ENCODE measurements at regions of chr22 and their contacts with region 1.

Region 1: GRCh38 chr22:41237707-41238569 is 2.8 kb downstream of the CHADL start:
- DNase-seq: peak; percentile 69 to 84 (median 77)
- H3K4me3 ChIP-seq: peak overlapping the region; percentile 50
- H3K4me3 Mint-ChIP-seq: peak overlapping the region in 5 of 7 donors; percentile 24 to 76 (median 70)
- H3K27ac ChIP-seq: no peak overlapping the region
- H3K27ac Mint-ChIP-seq: no peak overlapping the region
- H3K4me1 ChIP-seq: peaks cover 9% of the 10 kb centered on the region
- H3K4me1 Mint-ChIP-seq: peaks cover 3 to 15% (median 4%) of the 10 kb centered on the region in 3 donors
- H3K27me3 ChIP-seq: no peaks in the 10 kb centered on the region
- H3K27me3 Mint-ChIP-seq: no peaks in the 10 kb centered on the region

Region 2: GRCh38 chr22:40928657-40929056 is 309.3 kb before region 1 on chr22:
- CTCF ChIA-PET with region 1: interaction called, 66 read pairs
- POLR2A ChIA-PET with region 1: interaction called, 9 read pairs
- DNase-seq: no peak
- H3K4me3 ChIP-seq: no peak overlapping the region
- H3K4me3 Mint-ChIP-seq: no peak overlapping the region
- H3K27ac ChIP-seq: no peak overlapping the region
- H3K27ac Mint-ChIP-seq: no peak overlapping the region
- H3K4me1 ChIP-seq: no peaks in the 10 kb centered on the region
- H3K4me1 Mint-ChIP-seq: no peaks in the 10 kb centered on the region
- H3K27me3 ChIP-seq: no peaks in the 10 kb centered on the region
- H3K27me3 Mint-ChIP-seq: no peaks in the 10 kb centered on the region

Region 3: GRCh38 chr22:41206719-41207118 is 31.2 kb before region 1 on chr22:
- CTCF ChIA-PET with region 1: interaction called, 13 read pairs
- POLR2A ChIA-PET with region 1: no interaction called
- DNase-seq: no peak
- H3K4me3 ChIP-seq: no peak overlapping the region
- H3K4me3 Mint-ChIP-seq: peak overlapping the region; percentile 52 to 79 (median 66)
- H3K27ac ChIP-seq: no peak overlapping the region
- H3K27ac Mint-ChIP-seq: peak overlapping the region in 4 of 8 donors; percentile 40 to 77 (median 61)
- H3K4me1 ChIP-seq: peaks cover 11% of the 10 kb centered on the region
- H3K4me1 Mint-ChIP-seq: peaks cover 29 to 49% (median 43%) of the 10 kb centered on the region in 3 donors
- H3K27me3 ChIP-seq: no peaks in the 10 kb centered on the region
- H3K27me3 Mint-ChIP-seq: peaks cover 5 to 9% of the 10 kb centered on the region in 2 donors

Measured in CD8-positive, alpha-beta memory T cell (primary cell).